ENCODE measurements at regions of chr12 and their contacts with region 1.

Region 1: DNA sequence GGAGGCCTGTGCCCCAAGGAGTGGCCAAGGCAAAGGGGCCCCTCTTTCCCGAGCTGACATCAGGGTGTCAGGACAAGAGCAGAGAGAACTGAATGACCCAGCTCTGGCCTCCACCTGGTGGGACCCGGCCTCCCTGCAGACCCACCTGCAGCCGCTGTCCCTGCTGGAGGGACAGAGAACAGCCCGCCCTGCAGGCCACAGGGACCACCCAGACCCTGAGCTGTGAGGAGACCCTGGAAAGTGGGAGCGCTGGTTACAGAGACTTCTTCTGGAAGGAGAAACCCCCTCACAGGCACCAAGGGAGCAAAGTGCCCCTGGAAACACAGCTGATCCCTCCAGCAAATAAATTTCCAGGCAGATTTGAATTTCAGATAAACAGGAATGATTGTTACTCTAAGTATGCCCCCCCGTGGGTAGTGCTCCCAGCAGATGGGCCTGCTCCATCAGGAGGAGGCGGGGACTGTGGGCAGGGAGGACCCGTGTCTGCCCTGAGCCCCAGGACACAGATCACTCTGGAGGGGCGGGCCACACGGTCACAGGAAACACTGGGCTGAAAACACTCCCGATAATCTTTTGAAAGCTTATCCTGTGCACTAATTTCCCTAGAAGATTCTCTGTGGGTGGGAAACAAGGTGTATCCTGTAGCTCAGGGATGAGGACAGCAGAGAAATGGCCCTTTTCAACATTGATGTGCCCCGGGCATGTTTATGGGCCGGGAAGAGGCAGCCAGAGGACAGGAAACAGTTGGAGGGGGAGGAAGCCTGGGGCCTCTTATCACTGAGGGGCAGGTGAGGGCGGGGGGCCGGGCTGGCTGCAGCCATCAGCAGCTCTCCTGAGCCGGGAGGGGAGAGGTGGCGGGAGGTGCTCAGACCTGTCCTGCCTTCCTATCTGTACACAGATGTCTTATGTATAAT is 276.0 kb downstream of the ADGRD1 start:
- DNase-seq: no peak
- H3K4me3 ChIP-seq: no peak overlapping the region
- H3K27ac ChIP-seq: no peak overlapping the region
- H3K4me1 ChIP-seq: peaks cover 0 to 9% (median 3%) of the 10 kb centered on the region in 4 donors
- H3K27me3 ChIP-seq: peaks cover 9% of the 10 kb centered on the region
- CTCF ChIP-seq: no peak
- EP300 ChIP-seq: no peak
- POLR2A ChIP-seq: no peak

Region 2: DNA sequence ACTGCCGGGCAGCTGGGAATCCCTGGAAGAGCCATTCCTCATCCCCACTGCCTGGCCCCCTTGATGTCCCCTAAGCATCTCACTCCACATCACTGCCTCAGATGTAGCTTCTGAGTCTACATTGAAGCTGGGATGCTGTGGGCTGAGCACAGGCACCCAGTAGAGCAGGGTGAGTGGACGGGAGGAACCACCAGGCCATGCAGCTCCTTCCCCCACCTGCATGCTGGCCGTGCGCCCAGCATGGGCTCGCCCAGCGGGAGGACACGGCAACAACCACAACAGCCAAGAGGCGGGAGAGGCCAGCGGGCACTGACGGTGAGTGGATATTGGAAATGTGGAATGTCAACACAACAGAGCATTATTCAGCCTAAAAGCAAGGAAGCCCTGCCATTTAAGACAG is 34.9 kb after region 1 on chr12:
- in situ Hi-C with region 1: no loop called
- intact Hi-C with region 1: loop called (anchors 2 kb)
- DNase-seq: no peak
- H3K4me3 ChIP-seq: no peak overlapping the region
- H3K27ac ChIP-seq: no peak overlapping the region
- H3K4me1 ChIP-seq: no peaks in the 10 kb centered on the region
- H3K27me3 ChIP-seq: no peaks in the 10 kb centered on the region
- CTCF ChIP-seq: no peak
- EP300 ChIP-seq: no peak
- POLR2A ChIP-seq: no peak

Region 3: DNA sequence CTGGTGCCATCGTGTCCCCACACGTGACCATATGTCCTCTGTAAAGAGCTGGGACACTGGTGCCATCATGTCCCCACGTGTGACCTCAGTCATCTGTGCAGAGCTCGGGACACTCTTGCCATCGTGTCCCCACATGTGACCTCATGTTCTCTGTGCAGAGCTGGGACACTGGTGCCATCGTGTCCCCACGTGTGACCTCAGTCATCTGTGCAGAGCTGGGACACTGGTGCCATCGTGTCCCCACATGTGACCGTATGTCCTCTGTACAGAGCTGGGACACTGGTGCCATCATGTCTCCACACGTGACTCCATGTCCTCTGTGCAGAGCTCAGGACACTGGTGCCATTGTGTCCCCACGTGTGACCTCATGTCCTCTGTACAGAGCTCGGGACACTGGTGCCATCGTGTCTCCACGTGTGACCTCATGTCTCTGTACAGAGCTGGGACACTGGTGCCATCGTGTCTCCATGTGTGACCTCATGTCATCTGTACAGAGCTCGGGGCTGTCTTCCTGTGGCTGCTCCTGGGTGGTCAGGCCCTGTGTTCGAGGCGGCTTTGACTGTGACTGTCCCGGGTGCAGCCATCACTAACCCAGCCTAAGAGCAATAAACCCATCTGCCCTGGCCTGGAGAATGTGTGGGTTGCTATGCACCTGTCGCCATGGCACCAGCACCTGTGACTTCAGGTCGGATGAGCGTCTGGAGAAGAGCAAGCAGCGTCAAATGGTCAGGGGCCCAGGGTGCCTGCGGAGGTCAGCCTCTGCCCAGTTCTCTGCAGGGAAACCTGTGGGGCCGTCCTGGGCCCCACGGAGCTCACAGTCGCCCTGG is 58.5 kb after region 1 on chr12:
- in situ Hi-C with region 1: no loop called
- intact Hi-C with region 1: no loop called
- DNase-seq: no peak
- H3K4me3 ChIP-seq: no peak overlapping the region
- H3K27ac ChIP-seq: no peak overlapping the region
- H3K4me1 ChIP-seq: no peaks in the 10 kb centered on the region
- H3K27me3 ChIP-seq: no peaks in the 10 kb centered on the region
- CTCF ChIP-seq: no peak
- EP300 ChIP-seq: no peak
- POLR2A ChIP-seq: no peak

Region 4: DNA sequence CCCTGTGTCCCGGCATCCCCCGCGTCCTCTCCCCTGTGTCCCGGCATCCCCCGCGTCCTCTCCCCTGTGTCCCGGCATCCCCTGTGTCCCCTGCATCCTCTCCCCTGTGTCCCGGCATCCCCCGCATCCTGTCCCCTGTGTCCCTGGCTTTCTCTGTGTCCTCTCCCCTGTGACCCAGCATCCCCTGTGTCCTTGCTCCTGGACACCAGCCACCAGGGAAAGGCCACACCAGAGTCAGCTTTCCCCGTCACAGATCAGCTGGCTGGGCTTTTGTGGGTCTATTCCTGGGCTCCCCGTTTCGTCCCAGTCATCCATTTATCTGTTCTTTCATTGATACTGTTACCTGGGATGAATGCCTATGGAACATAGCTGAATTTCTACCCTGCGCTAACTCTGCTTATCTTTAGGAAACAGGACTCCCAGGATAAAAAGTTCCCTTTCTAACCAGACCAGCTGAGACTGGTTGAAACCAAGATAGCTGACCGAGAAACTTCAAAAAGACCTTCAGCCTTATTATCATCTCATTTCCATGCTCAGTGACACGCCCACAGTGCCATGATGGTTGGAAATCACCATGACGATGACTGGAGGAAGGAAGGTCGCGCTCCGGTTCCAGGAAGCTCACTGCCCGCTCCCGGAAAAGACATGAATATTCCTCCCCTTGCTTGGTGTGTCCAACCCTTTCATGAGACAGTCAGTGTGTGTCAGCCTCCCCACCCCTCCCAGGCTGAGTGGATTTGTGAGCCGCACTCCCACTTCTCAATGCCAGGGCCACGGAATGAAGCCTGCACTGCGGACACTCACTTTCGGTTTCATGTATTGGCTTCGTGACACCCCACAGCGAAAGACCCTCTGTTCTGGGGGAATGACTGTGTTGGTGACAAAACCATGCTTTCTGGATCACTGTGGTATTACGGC is 204.8 kb after region 1 on chr12:
- in situ Hi-C with region 1: loop called in 1 of 4 experiments (anchors 5 kb)
- intact Hi-C with region 1: no loop called
- DNase-seq: no peak
- H3K4me3 ChIP-seq: no peak overlapping the region
- H3K27ac ChIP-seq: no peak overlapping the region
- H3K4me1 ChIP-seq: no peaks in the 10 kb centered on the region
- H3K27me3 ChIP-seq: peaks cover 33% of the 10 kb centered on the region
- CTCF ChIP-seq: no peak
- EP300 ChIP-seq: no peak
- POLR2A ChIP-seq: no peak